Right cardiac atrium (tissue), 5 donors: ENCODE measurements at regions of chr1 and their contacts with region 1.

Region 1: DNA sequence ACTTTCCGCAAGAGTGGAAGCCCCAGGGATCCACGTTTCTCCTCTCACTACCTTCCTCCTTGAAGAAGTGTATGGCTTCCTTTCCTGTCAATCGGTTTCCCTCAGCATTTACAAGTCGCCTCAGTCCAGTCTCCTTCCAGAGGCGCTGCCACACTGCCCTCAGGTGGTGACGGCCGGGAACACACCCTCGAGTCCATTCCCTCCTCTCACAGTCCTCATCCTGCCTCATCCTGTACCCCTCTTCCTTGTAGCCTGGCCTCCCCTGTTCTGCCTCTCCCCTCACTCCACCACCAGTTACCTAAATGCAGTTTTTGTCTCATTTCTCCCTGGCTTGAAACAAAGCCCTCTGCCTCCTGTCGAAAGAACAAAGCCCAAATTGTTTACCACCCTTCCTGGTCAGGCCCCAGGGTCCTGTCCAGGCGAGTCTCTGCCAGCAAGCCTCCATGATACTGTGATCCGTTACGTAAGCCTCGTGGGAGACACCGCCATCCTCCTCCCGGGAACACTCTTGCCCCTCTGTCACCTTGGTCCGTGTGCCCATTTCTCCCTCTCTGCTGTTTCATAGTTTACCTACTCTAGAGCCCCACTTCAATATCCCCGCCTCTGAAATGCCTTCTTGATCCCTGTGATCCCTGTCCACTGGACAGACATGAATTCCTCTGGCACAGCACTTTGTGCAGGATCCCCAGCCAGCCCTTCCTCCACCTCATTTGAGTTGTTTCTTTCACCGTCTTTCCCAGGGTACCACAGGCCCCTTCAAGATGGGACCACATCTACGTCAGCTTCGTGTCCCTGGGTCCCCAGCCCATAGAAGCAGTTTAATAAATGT is 23.3 kb upstream of the LSM10 start:
- DNase-seq: peak; percentile 84 to 96 (median 94)
- ATAC-seq: peak; percentile 89 to 94
- H3K4me3 ChIP-seq: no peak overlapping the region
- H3K27ac ChIP-seq: no peak overlapping the region
- H3K4me1 ChIP-seq: no peaks in the 10 kb centered on the region
- H3K27me3 ChIP-seq: no peaks in the 10 kb centered on the region

Region 2: DNA sequence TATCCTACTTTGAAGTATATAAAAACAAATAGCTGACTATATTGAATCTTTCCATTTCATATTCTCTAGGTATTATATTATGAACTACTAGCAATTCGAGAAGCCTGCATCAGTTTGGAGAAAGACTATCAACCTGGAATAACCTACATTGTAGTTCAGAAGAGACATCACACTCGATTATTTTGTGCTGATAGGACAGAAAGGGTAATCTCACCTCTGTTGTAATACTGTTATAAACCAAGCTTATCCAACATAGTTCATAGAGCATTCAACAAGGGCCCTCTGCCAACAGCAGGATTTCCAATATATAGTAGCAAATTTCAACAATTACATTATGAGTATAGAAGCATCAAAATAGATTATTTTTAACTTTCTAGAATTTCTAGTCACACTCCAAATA is 380.8 kb before region 1 on chr1:
- intact Hi-C with region 1: no loop called
- DNase-seq: no peak
- ATAC-seq: no peak
- H3K4me3 ChIP-seq: no peak overlapping the region
- H3K27ac ChIP-seq: no peak overlapping the region
- H3K4me1 ChIP-seq: no peaks in the 10 kb centered on the region
- H3K27me3 ChIP-seq: no peaks in the 10 kb centered on the region

Region 3: GRCh38 chr1:36269408-36269838 is 151.6 kb before region 1 on chr1:
- intact Hi-C with region 1: no loop called
- DNase-seq: no peak
- ATAC-seq: peak in 1 of 2 donors; percentile 38
- H3K4me3 ChIP-seq: no peak overlapping the region
- H3K27ac ChIP-seq: no peak overlapping the region
- H3K4me1 ChIP-seq: no peaks in the 10 kb centered on the region
- H3K27me3 ChIP-seq: no peaks in the 10 kb centered on the region

Region 4: GRCh38 chr1:36342481-36343478 is 78.3 kb before region 1 on chr1:
- intact Hi-C with region 1: loop called (anchors 5 kb)
- DNase-seq: peak; percentile 54 to 81 (median 77)
- ATAC-seq: peak; percentile 58 to 59
- H3K4me3 ChIP-seq: no peak overlapping the region
- H3K27ac ChIP-seq: no peak overlapping the region
- H3K4me1 ChIP-seq: no peaks in the 10 kb centered on the region
- H3K27me3 ChIP-seq: no peaks in the 10 kb centered on the region

Region 5: GRCh38 chr1:36352948-36353878 is 67.8 kb before region 1 on chr1:
- intact Hi-C with region 1: no loop called
- DNase-seq: no peak
- ATAC-seq: no peak
- H3K4me3 ChIP-seq: no peak overlapping the region
- H3K27ac ChIP-seq: no peak overlapping the region
- H3K4me1 ChIP-seq: peaks cover 16% of the 10 kb centered on the region
- H3K27me3 ChIP-seq: no peaks in the 10 kb centered on the region

Region 6: GRCh38 chr1:36366091-36366661 is 54.9 kb before region 1 on chr1:
- intact Hi-C with region 1: no loop called
- DNase-seq: peak in 2 of 3 donors; percentile 74 to 80
- ATAC-seq: peak; percentile 30 to 57
- H3K4me3 ChIP-seq: no peak overlapping the region
- H3K27ac ChIP-seq: peak overlapping the region; percentile 22
- H3K4me1 ChIP-seq: peaks cover 7% of the 10 kb centered on the region
- H3K27me3 ChIP-seq: no peaks in the 10 kb centered on the region